Activated CD4-positive, alpha-beta T cell treated with anti-CD3 and anti-CD28 coated beads, Interleukin-2, amount 10 ng/mL, durations not matched to agents 7 days and 5 days (primary cell): ENCODE measurements at regions of chr4 and their contacts with region 1.

Region 1: GRCh38 chr4:1167247-1167949 is 5.0 kb downstream of the SPON2 start:
- DNase-seq: peak; percentile 93
- H3K4me3 Mint-ChIP-seq: peak overlapping the region; percentile 79
- H3K27ac Mint-ChIP-seq: peak overlapping the region; percentile 69
- H3K4me1 Mint-ChIP-seq: peaks cover 35% of the 10 kb centered on the region
- H3K27me3 Mint-ChIP-seq: peaks cover 12% of the 10 kb centered on the region

Region 2: GRCh38 chr4:1154523-1155182 is 12.7 kb before region 1 on chr4:
- CTCF ChIA-PET with region 1: interaction called, 10 read pairs
- POLR2A ChIA-PET with region 1: no interaction called
- DNase-seq: no peak
- H3K4me3 Mint-ChIP-seq: no peak overlapping the region
- H3K27ac Mint-ChIP-seq: no peak overlapping the region
- H3K4me1 Mint-ChIP-seq: no peaks in the 10 kb centered on the region
- H3K27me3 Mint-ChIP-seq: peaks cover 25% of the 10 kb centered on the region

Region 3: DNA sequence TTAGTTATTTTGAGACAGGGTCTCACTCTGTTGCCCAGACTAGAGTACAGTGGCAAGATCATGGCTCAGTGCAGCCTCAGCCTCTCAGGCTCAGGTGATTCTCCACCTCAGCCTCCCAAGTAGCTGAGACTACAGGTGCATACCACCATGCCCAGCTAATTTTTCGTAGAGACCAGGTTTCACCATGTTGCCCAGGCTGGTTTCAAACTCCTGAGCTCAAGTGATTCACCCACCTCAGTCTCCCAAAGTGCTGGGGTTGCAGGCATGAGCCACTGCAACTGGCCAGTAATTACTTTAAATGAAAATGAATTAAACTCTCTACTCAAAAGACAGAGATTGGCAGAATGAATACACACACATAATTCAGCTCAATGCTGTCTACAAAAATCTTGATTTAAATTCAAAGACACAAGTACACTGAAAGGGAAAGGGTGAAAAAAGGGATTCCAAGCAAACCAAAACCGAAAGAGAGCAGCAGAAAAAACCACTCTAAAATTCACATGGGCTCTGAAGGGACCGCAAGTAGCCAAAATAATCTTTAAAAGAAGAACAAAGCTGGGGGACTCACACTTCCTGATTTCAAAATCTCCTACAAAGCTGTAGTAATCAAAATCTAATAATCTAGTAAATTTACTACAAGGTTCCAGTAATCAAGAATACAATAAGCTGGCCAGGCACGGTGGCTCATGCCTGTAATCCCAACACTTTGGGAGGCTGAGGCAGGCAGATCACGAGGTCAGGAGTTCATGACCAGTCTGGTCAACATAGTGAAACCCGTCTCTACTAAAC is 16.8 kb after region 1 on chr4:
- CTCF ChIA-PET with region 1: interaction called, 12 read pairs
- POLR2A ChIA-PET with region 1: interaction called, 13 read pairs
- DNase-seq: no peak
- H3K4me3 Mint-ChIP-seq: peak overlapping the region; percentile 3
- H3K27ac Mint-ChIP-seq: peak overlapping the region; percentile 7
- H3K4me1 Mint-ChIP-seq: peaks cover 56% of the 10 kb centered on the region
- H3K27me3 Mint-ChIP-seq: peaks cover 6% of the 10 kb centered on the region